Ascending aorta (tissue), 2 donors: ENCODE measurements at regions of chr15 and their contacts with region 1.

Region 1: GRCh38 chr15:98292442-98293240 is 332.1 kb downstream of the ARRDC4 start:
- DNase-seq: no peak
- H3K4me3 ChIP-seq: no peak overlapping the region
- H3K27ac ChIP-seq: no peak overlapping the region
- H3K4me1 ChIP-seq: no peaks in the 10 kb centered on the region
- H3K27me3 ChIP-seq: no peaks in the 10 kb centered on the region
- CTCF ChIP-seq: peak in 2 of 3 experiments; percentile 34 to 48

Region 2: DNA sequence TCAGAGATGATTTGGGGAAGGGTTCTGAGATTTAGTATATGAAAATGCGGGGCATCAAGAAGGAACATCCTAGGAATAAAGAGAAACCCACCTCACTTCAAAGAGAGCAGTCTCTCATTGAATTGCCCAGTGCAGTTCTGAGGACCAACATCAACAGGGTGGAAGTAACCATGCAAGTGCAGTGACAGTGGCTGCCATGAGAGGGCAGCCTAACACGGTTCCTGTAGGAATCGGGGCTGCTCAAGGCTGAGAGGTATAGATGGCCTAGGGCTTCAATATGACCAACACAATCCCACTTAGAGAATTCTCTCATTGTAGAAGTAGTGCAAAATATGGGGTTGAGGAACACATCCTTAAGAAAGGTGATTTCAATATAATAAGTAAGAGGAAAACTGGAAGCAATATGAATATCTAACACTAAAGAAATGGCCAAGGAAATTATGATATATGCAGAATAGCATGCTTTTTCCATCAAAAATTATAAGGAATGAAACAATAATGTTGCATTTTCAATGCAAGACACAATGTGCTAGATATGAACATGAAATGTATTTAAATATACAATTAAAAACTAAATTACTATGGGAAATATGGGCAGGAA is 383.2 kb before region 1 on chr15:
- intact Hi-C with region 1: loop called (anchors 5 kb)
- DNase-seq: peak in 1 of 2 donors; percentile 67
- H3K4me3 ChIP-seq: no peak overlapping the region
- H3K27ac ChIP-seq: no peak overlapping the region
- H3K4me1 ChIP-seq: no peaks in the 10 kb centered on the region
- H3K27me3 ChIP-seq: no peaks in the 10 kb centered on the region
- CTCF ChIP-seq: peak; percentile 31 to 69 (median 66)